Tibial artery (tissue), 4 donors: ENCODE measurements at regions of chr1 and their contacts with region 1.

Region 1: GRCh38 chr1:3069491-3070303 is 694 bp downstream of the PRDM16 start:
- DNase-seq: peak; percentile 55 to 84
- H3K4me3 ChIP-seq: peak overlapping the region; percentile 77 to 92
- H3K27ac ChIP-seq: peak overlapping the region; percentile 98 to 100
- H3K4me1 ChIP-seq: peaks cover 0 to 77% (median 50%) of the 10 kb centered on the region in 4 donors
- H3K27me3 ChIP-seq: no peaks in the 10 kb centered on the region
- CTCF ChIP-seq: peak; percentile 21 to 27

Region 2: DNA sequence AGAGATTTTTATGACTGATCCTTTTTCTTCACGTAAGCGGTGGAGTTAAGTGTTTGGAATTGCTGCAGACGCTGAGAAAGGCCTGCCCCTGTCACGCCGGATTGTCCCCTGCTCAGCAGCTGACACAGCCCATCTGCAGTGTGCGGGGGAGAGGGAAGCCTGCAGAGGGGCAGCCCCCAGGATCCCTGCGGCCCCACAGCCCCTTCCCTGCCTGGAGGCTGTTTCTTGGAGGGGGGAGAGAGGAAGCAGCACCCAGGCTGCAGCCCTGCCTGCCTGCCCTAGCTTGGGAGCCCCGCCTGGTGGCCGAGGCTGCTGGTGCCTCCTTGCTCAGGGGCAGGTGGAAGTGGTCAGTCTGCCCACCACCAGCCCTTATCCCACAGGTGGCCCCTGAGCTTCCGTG is 50.0 kb after region 1 on chr1:
- intact Hi-C with region 1: loop called (anchors 5 kb)
- DNase-seq: no peak
- H3K4me3 ChIP-seq: no peak overlapping the region
- H3K27ac ChIP-seq: peak overlapping the region; percentile 90
- H3K4me1 ChIP-seq: peaks cover 0 to 100% (median 92%) of the 10 kb centered on the region in 4 donors
- H3K27me3 ChIP-seq: no peaks in the 10 kb centered on the region
- CTCF ChIP-seq: no peak

Region 3: GRCh38 chr1:3170561-3171453 is 101.1 kb after region 1 on chr1:
- intact Hi-C with region 1: loop called (anchors 5 kb)
- DNase-seq: peak; percentile 84 to 97
- H3K4me3 ChIP-seq: peak overlapping the region; percentile 41 to 52
- H3K27ac ChIP-seq: peak overlapping the region; percentile 88
- H3K4me1 ChIP-seq: peaks cover 6 to 81% (median 73%) of the 10 kb centered on the region in 4 donors
- H3K27me3 ChIP-seq: no peaks in the 10 kb centered on the region
- CTCF ChIP-seq: no peak

Region 4: DNA sequence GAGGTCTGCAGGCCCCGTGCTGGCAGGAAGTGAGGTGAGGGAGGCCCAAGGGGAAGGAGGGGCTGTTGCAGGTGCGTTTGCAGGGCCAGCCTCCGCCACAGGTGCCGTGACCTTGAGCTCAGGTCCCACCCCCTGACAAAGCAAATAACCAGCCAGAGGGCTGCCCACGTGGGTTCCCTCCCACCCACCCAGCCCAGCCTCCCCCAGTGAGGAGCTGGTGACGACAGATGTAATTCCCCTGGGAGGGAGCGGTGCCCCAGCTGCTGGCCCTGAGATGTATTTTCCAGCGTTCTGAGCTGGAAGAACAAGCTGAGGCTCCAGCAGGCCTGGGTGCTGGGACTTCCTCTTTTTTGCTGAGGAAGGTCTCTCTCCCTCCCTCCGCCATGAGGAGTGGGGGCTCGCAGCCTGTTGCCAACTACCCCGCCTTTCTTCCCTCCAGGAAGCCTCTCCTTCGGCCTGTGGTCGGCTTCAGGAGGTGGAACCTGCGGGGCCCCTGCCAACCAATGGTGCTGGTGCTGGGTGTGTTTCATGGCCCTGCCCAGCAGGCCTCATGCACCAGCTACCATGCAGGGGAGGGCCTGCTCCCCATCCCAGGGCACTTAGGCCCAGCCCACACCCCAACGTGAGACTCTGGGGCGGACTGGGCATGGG is 152.5 kb after region 1 on chr1:
- intact Hi-C with region 1: loop called (anchors 5 kb)
- DNase-seq: peak; percentile 32 to 90
- H3K4me3 ChIP-seq: no peak overlapping the region
- H3K27ac ChIP-seq: peak overlapping the region; percentile 67 to 81
- H3K4me1 ChIP-seq: peaks cover 0 to 90% (median 65%) of the 10 kb centered on the region in 4 donors
- H3K27me3 ChIP-seq: no peaks in the 10 kb centered on the region
- CTCF ChIP-seq: peak in 1 of 2 experiments; percentile 7

Region 5: GRCh38 chr1:3352299-3352951 is 282.7 kb after region 1 on chr1:
- intact Hi-C with region 1: loop called (anchors 5 kb)
- DNase-seq: peak; percentile 82 to 93
- H3K4me3 ChIP-seq: peak overlapping the region; percentile 31 to 41
- H3K27ac ChIP-seq: peak overlapping the region; percentile 94
- H3K4me1 ChIP-seq: peaks cover 11 to 99% (median 93%) of the 10 kb centered on the region in 4 donors
- H3K27me3 ChIP-seq: no peaks in the 10 kb centered on the region
- CTCF ChIP-seq: no peak

Region 6: GRCh38 chr1:3410142-3410925 is 340.6 kb after region 1 on chr1:
- intact Hi-C with region 1: loop called (anchors 5 kb)
- DNase-seq: peak; percentile 71 to 89
- H3K4me3 ChIP-seq: no peak overlapping the region
- H3K27ac ChIP-seq: peak overlapping the region; percentile 40 to 62
- H3K4me1 ChIP-seq: peaks cover 0 to 13% (median 0%) of the 10 kb centered on the region in 4 donors
- H3K27me3 ChIP-seq: no peaks in the 10 kb centered on the region
- CTCF ChIP-seq: peak; percentile 88 to 89